PC-9 (cell line): ENCODE measurements at regions of chr11 and their contacts with region 1.

Region 1: DNA sequence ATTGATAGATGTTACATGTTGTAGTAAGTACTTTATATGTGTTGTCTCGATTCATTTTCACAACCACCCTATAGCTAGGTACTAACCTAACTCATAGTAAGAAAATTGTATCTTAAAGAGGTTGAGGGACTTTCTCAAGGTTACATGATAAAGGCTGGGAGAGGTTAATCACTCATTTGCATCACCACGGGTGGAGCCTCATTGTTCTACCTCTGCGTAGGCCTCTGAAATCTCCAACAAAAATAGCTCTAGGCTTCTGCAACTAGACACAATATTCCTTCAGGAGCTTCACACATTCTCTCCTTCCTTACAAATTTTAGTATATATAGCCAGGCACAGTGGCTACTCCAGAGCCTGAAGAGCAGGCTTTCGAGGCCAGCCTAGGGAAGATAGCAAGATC is 408.9 kb upstream of the ANO5 start:
- DNase-seq: no peak
- H3K4me3 ChIP-seq: no peak overlapping the region
- H3K27ac ChIP-seq: no peak overlapping the region
- H3K4me1 ChIP-seq: no peaks in the 10 kb centered on the region
- H3K27me3 ChIP-seq: no peaks in the 10 kb centered on the region
- CTCF ChIP-seq: no peak

Region 2: DNA sequence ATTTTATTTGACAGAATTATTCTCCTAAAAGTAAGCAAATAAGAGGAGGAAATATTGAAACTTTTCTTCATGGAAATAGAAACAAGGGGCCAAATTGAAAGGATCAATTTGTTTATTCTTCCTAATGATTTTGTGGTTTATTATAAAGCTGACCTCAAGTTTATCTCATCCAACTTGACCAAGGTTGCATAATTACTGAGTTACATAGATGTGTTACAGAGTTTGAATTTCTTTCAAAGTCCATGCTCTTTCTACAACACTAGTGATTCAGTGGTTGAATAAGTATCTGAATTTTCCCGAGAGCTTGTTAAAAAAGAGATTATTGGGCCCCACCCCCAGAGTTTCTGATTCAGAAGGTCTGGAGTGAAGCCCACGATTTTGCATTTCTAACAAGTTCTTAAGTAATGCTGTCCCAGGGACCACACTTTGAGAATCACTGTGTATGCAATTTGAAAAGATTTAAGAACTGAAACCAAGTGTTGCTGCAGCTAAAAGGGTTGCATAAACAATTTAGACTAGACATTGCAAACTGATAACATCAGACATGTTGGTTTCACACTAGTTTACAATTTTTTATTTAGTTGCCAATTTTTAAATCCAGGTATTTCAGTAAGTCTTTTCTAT is 76.7 kb before region 1 on chr11:
- CTCF ChIA-PET with region 1: interaction called, 17 read pairs
- POLR2A ChIA-PET with region 1: no interaction called
- intact Hi-C with region 1: no loop called
- DNase-seq: no peak
- H3K4me3 ChIP-seq: no peak overlapping the region
- H3K27ac ChIP-seq: no peak overlapping the region
- H3K4me1 ChIP-seq: no peaks in the 10 kb centered on the region
- H3K27me3 ChIP-seq: no peaks in the 10 kb centered on the region
- CTCF ChIP-seq: no peak